Posterior vena cava (tissue), 2 donors: ENCODE measurements at regions of chr7 and their contacts with region 1.

Region 1: GRCh38 chr7:102326157-102326889 is 29.9 kb downstream of the SPDYE6 start:
- DNase-seq: no peak

Region 2: DNA sequence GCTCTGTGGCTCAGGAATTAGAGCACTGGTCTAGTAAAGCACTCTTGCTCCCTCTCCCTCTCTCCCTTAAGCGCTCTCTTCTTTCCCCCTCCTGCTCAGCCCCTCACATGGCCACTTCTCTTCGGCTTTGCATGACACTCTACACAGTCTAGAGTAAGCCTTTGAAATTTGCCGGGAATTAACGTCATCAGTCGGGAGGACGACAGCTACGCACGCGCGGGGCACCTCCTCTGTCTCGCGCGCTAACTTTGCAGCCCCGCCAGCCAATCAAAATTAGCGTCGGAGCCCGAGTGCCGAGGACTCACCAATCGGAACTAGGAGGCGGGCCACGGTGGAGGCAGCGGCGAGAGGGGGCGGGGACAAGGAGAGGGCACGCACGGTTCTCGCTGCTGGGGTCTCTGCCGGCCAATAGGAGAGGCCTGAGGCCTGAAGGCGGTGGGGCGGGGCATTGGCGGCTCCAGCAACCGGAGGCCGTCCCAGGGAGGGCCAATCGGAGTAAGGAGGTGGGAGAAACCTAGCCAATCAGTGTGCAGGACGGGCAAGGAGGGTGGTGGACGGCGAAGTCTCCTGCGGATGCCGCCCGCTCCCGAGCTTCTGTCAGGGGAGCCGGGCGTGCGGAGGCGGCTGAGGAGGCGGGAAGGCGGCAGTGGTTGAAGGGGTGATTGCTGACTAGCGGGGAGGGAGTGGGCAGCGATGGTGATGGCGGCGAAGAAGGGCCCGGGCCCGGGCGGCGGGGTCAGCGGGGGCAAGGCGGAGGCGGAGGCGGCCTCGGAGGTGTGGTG is 1787.5 kb before region 1 on chr7 and contains the start of gene AGFG2:
- intact Hi-C with region 1: loop called in 1 of 2 experiments (anchors 5 kb)
- DNase-seq: peak; percentile 100
- total RNA-seq, gene AGFG2: 18.8 to 20.4 TPM

Region 3: DNA sequence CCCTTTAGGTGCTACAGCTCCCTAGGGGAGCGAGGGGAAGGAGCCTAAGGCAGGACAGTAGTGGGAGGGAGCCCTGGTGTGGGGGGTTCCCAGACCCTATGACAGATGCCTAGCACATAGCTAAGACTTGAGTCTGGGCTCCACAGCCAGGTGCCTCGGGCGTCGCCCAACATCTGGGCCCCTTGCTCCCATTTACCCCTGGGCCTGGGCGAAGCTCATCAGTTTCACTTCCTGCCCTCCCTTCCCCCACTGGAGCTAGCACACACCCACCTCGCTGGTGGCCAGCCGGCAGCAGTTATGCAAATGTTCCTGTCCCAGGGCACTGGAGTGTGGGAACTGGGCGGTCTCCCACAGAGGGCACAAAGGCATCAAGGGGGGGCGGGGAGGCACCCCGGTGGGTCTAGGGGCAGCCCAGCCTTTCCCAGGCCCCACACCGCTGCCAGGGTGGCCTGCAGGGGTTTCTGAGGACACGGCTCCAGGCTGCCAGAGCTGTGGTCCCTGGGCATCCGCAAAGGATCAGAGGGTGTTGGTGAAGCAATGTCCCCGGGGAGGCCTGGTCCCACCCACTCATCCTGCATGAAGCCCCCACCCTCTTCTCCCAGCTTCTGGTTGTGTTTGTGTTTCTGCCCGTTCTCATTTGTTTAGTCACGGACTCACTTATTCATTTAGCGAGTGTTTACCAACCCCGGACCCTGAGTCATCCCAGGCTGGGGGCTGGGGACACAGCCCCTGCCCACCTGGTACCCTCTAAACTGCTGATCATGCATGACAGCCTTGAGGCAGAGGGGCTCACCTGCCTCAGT is 19.2 kb before region 1 on chr7:
- intact Hi-C with region 1: no loop called
- DNase-seq: no peak